Dendritic cell treated with granulocyte-macrophage colony-stimulating factor and Interleukin-4, amounts not matched to agents 40 ng/mL and 50 ng/mL, for 4 days (primary cell): ENCODE measurements at regions of chr19 and their contacts with region 1.

Region 1: GRCh38 chr19:47436712-47437401 is 17.5 kb upstream of the MEIS3 start:
- H3K4me3 Mint-ChIP-seq: no peak overlapping the region
- H3K27ac Mint-ChIP-seq: no peak overlapping the region
- H3K4me1 Mint-ChIP-seq: peaks cover 11% of the 10 kb centered on the region
- H3K27me3 Mint-ChIP-seq: peaks cover 47% of the 10 kb centered on the region

Region 2: GRCh38 chr19:47421844-47422395 is 14.9 kb before region 1 on chr19:
- intact Hi-C with region 1: no loop called
- H3K4me3 Mint-ChIP-seq: no peak overlapping the region
- H3K27ac Mint-ChIP-seq: no peak overlapping the region
- H3K4me1 Mint-ChIP-seq: peaks cover 25% of the 10 kb centered on the region
- H3K27me3 Mint-ChIP-seq: peaks cover 78% of the 10 kb centered on the region

Region 3: DNA sequence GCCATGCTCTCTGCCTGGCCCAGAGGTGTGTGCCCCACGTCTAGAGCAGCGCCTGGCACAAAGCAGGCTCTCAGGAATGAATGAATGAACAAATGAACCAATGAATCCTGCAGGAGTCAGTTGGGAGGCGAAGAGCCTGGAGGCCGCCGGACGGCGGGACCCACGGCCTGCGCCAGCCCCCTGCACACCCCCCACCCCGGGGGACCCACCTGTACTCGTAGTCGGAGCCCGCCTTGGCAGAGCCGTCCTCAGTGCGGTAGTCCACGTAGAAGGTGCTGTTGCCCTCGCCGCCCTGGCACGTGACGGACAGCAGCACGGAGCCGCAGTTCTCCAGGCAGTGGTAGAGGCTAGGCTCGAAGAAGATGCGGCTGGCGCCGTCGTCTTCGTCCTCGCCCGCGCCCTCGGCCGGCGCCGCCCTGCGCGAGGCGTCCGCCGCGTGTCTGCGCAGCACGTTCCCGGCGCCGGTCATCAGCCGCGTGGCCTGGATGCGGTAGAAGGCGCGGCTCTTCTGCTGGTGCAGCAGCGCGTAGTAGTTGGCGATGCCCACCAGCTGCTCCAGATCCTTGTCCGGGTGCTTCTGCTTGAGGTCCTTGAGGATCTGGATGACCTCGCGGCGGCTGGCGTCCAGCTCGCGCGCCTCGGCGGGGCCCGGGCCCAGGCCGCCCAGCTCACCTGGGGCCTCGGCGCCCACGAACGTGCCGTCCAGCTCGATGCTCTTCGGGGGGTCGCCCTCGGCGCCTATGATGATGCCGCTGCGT is 20.0 kb after region 1 on chr19:
- intact Hi-C with region 1: no loop called
- H3K4me3 Mint-ChIP-seq: no peak overlapping the region
- H3K27ac Mint-ChIP-seq: no peak overlapping the region
- H3K4me1 Mint-ChIP-seq: no peaks in the 10 kb centered on the region
- H3K27me3 Mint-ChIP-seq: peaks cover 29% of the 10 kb centered on the region

Region 4: DNA sequence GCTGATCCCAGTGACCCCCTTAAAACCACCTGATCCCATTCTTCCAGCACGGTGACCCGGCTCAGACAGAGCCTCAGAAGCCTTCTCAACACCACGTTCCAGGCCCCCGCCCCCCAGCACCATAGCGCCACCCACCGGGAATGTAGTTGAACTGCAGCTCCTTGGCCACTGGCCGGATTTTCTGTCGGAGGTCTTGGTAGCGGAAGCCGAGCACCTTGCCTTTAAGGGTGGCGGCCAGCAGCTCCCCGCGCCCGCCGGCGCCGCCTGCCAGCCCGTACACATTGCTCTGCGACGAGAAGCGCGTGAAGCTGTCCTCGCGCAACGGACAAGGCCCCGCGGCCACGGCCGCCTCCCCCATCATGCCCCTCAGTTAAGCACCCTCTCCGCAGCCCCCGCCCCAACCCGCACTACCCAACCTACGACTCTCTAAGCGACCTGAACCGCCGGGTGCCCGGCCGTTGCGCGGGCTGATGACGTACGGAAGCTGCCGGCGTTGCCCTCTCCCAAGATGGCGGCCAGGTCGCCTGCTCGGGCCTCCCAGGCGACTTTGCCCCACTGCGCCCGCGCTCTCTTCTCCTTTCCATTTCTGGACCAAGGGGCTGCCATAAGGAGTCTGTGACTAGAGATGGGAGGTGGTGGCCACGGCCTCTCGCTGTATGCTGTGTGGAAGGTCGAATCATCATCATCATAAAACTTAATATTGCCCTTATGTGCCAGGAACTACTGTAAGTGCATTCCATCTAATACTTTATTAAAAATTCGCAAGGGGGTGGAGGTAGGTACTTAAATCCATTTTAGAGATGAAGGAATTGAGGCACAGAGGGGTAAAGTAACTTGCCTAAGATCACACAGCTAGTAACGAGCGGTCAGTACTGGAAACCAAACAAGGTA is 47.2 kb after region 1 on chr19 and contains the start of gene KPTN:
- intact Hi-C with region 1: loop called (anchors 10 kb)
- H3K4me3 Mint-ChIP-seq: peak within 1 kb of the TSS; percentile 87
- H3K27ac Mint-ChIP-seq: peak within 1 kb of the TSS; percentile 99
- H3K4me1 Mint-ChIP-seq: peaks cover 43% of the 10 kb centered on the region
- H3K27me3 Mint-ChIP-seq: peaks cover 8% of the 10 kb centered on the region

Region 5: GRCh38 chr19:47697863-47698609 is 261.2 kb after region 1 on chr19:
- intact Hi-C with region 1: loop called (anchors 1 kb)
- H3K4me3 Mint-ChIP-seq: no peak overlapping the region
- H3K27ac Mint-ChIP-seq: peak overlapping the region; percentile 62
- H3K4me1 Mint-ChIP-seq: peaks cover 22% of the 10 kb centered on the region
- H3K27me3 Mint-ChIP-seq: no peaks in the 10 kb centered on the region

Region 6: DNA sequence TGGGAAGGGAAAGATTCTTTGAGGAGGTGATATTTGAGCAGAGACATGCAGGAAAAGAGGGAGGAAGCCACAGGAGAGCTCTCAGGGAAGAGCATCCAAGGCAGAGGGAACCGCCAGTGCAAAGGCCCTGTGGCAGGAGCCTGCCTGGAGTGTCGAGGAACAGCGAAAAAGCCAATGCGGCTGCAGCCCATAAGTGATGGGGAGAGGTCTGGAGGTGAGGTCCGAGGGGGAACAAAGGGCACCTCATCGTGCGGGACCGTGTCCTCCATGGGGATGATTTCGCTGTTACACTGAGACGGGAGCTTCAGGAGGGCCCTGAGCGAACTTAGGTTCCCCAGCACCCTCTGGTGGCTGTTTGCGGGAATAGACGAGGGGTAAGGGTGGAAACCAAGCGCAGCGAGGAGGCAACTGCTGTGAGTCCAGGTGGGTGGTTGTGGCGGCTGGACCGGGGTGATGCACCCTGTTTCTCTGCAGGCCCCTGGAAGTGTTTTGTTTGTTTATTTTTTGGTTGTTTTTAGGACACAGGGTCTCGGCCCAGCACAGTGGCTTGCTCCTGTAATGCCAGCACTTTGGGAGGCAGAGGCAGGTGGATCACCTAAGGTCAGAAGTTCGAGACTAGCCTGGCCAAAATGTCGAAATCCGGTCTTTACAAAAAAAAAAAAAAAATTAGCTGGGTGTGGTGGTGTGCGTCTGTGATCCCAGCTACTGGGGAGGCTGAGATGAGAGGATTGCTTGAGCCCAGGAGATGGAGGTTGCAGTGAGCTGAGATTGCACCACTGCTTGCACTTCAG is 270.5 kb after region 1 on chr19:
- intact Hi-C with region 1: loop called (anchors 1 kb)
- H3K4me3 Mint-ChIP-seq: no peak overlapping the region
- H3K27ac Mint-ChIP-seq: no peak overlapping the region
- H3K4me1 Mint-ChIP-seq: peaks cover 10% of the 10 kb centered on the region
- H3K27me3 Mint-ChIP-seq: peaks cover 26% of the 10 kb centered on the region